Calu3 (cell line): ENCODE measurements at regions of chr12 and their contacts with region 1.

Region 1: GRCh38 chr12:101939856-101940265 is 62.5 kb downstream of the DRAM1 start:
- DNase-seq: peak; percentile 72
- H3K4me3 Mint-ChIP-seq: no peak overlapping the region
- H3K27ac Mint-ChIP-seq: no peak overlapping the region
- H3K4me1 Mint-ChIP-seq: no peaks in the 10 kb centered on the region
- H3K27me3 Mint-ChIP-seq: peaks cover 49% of the 10 kb centered on the region
- CTCF ChIP-seq: peak; percentile 57

Region 2: GRCh38 chr12:101951002-101951670 is 11.3 kb after region 1 on chr12:
- CTCF ChIA-PET with region 1: no interaction called
- intact Hi-C with region 1: no loop called
- DNase-seq: no peak
- H3K4me3 Mint-ChIP-seq: no peak overlapping the region
- H3K27ac Mint-ChIP-seq: no peak overlapping the region
- H3K4me1 Mint-ChIP-seq: no peaks in the 10 kb centered on the region
- H3K27me3 Mint-ChIP-seq: peaks cover 8% of the 10 kb centered on the region
- CTCF ChIP-seq: no peak

Region 3: DNA sequence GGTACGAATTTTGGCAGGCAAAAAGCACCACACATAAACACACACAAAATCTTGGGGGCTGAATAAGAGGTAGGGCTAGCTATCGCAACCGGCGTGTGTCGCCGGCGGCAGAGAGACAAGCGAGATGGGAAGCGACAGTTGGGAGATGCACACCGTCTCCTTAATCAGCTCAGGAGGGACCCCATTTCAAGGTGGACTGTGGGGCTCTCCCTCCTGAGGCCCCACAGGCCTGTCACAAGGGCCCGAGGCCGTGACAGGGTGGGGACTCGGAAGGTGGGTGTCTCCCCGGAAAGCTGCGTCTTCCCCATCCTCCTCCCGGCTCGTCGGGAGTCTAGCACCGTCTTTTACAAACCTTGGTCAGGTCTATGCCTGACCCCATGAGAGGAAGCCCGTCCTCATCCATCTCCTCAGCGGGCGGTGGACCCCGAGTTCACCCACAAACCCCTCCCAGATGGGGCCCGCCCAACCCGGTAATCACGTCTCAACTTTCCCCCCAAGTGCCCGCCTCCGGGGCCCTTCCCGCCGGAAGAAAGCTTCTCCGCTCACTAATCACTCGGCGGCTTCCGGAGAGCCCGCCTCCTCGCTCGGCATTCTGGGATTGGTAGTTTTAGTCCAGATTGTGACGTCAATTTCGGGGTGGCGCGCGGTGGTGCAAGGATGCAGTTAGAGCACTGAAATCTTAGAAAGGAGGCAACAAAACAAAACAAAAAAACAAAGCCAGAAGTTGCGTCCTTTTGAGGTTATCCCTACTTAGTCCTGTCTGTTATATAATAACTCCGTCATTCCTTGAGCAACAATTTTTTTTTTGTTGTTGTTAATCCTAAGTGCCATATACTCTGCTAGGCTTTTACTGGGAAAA is 121.9 kb after region 1 on chr12 and contains the start of gene WASHC3:
- CTCF ChIA-PET with region 1: no interaction called
- intact Hi-C with region 1: loop called (anchors 1 kb)
- DNase-seq: peak; percentile 95
- H3K4me3 Mint-ChIP-seq: peak within 1 kb of the TSS; percentile 90
- H3K27ac Mint-ChIP-seq: peak within 1 kb of the TSS; percentile 71
- H3K4me1 Mint-ChIP-seq: peaks cover 8% of the 10 kb centered on the region
- H3K27me3 Mint-ChIP-seq: no peaks in the 10 kb centered on the region
- CTCF ChIP-seq: no peak
- total RNA-seq, gene WASHC3: 34.3 and 36.0 TPM in 2 replicates

Region 4: GRCh38 chr12:102484428-102484958 is 544.6 kb after region 1 on chr12:
- CTCF ChIA-PET with region 1: no interaction called
- intact Hi-C with region 1: loop called (anchors 5 kb)
- DNase-seq: peak; percentile 51
- H3K4me3 Mint-ChIP-seq: peak overlapping the region; percentile 47
- H3K27ac Mint-ChIP-seq: no peak overlapping the region
- H3K4me1 Mint-ChIP-seq: no peaks in the 10 kb centered on the region
- H3K27me3 Mint-ChIP-seq: no peaks in the 10 kb centered on the region
- CTCF ChIP-seq: peak; percentile 92

Region 5: GRCh38 chr12:102769319-102769916 is 829.6 kb after region 1 on chr12:
- CTCF ChIA-PET with region 1: no interaction called
- intact Hi-C with region 1: loop called (anchors 1 kb)
- DNase-seq: peak; percentile 69
- H3K4me3 Mint-ChIP-seq: no peak overlapping the region
- H3K27ac Mint-ChIP-seq: no peak overlapping the region
- H3K4me1 Mint-ChIP-seq: no peaks in the 10 kb centered on the region
- H3K27me3 Mint-ChIP-seq: peaks cover 14% of the 10 kb centered on the region
- CTCF ChIP-seq: peak; percentile 63

Region 6: DNA sequence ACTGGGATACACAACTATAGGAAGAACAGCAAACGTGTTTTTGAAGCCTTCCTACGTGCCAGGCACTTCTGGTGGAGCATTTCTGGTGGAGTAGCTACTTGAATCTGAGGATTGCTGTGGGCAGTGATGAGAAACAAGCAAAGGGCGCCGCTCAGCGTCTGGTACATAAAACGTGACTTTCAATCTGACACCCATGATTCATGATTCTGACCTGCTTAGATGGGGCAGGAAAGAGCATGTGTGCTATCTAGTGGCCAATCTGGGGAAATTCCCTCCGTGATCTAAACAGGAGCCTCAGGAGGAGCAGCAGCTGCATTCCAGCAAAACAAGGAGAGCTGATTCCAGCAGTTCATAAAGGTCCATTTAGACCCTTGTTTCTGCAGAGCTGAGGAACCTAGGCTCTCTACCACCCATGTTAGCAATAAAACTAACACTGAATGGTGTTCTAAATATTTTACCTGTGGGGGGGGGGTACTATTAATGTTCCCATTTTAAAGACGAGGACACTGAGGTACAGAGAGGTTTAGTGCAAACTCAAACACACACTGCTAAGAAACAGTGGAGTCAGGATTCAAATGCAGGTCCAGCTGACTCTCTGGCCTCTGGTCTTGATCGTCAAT is 939.4 kb after region 1 on chr12:
- CTCF ChIA-PET with region 1: no interaction called
- intact Hi-C with region 1: loop called (anchors 2 kb)
- DNase-seq: peak; percentile 65
- H3K4me3 Mint-ChIP-seq: no peak overlapping the region
- H3K27ac Mint-ChIP-seq: no peak overlapping the region
- H3K4me1 Mint-ChIP-seq: peaks cover 12% of the 10 kb centered on the region
- H3K27me3 Mint-ChIP-seq: no peaks in the 10 kb centered on the region
- CTCF ChIP-seq: peak; percentile 60